ENCODE measurements at regions of chr2 and their contacts with region 1.

Region 1: GRCh38 chr2:95207111-95207961 is at the start of gene ZNF892:
- DNase-seq: peak; percentile 68 to 78 (median 69)
- H3K4me3 ChIP-seq: peak within 1 kb of the TSS; percentile 47 to 93
- H3K4me3 Mint-ChIP-seq: peak within 1 kb of the TSS; percentile 93 to 97 (median 96)
- H3K27ac ChIP-seq: peak within 1 kb of the TSS; percentile 70
- H3K27ac Mint-ChIP-seq: peak within 1 kb of the TSS; percentile 71 to 92 (median 90)
- H3K4me1 ChIP-seq: peaks cover 15% of the 10 kb centered on the region
- H3K4me1 Mint-ChIP-seq: peaks cover 11 to 19% (median 15%) of the 10 kb centered on the region in 4 donors
- H3K27me3 ChIP-seq: no peaks in the 10 kb centered on the region
- H3K27me3 Mint-ChIP-seq: no peaks in the 10 kb centered on the region
- total RNA-seq, gene ZNF892: 4.7 to 5.9 TPM

Region 2: DNA sequence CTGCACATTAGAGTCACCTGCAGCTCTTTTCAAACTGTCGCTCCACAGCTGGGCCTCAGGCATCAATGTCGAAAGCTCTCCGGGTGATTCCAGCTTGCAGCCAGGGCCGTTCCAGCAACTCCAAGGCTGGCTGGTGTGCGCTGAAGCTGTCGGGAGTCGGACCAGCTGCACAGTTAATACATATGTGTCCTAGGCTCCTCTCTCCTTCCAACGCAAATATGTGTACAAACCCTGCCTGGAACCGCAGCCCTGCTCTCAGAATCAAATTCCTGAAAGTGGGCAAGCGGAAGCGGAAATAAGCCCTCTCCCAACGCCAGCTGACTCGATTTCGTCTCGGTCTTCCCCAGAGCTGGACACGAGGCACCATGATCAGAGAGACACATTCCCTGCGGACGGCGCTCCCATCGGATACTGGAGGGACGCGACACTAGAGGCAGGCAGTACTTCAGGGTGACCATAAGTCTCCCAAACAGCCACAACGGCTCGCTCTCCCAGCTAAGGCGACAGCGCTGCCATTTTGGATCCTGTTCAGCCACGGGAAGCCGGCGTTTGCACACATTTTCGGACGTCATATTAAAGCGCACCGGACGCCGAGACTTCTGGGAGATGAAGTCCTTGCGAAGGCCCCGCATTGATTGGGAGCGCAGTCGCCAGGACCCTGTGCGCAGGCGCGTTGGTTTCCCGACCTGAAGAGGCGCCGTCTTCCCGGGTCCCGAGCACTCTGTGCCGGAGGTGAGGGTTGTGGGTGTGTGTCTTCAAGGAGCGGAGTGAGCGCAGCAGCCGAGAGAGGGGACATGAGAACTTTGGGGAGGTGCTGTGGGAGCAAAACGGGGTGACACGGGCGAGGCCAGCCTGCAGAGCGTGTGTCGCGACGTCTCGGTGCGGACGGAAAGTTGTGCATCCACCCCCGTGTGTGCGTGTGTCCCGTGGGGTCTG is 41.9 kb before region 1 on chr2 and contains the start of gene ZNF2:
- CTCF ChIA-PET with region 1: interaction called, 4 read pairs
- POLR2A ChIA-PET with region 1: interaction called, 4 read pairs
- intact Hi-C with region 1: loop called (anchors 1 kb)
- DNase-seq: peak; percentile 95 to 98 (median 96)
- H3K4me3 ChIP-seq: peak within 1 kb of the TSS; percentile 88 to 97
- H3K4me3 Mint-ChIP-seq: peak within 1 kb of the TSS; percentile 95 to 100 (median 100)
- H3K27ac ChIP-seq: peak within 1 kb of the TSS; percentile 89
- H3K27ac Mint-ChIP-seq: peak within 1 kb of the TSS; percentile 94 to 99 (median 98)
- H3K4me1 ChIP-seq: peaks cover 21% of the 10 kb centered on the region
- H3K4me1 Mint-ChIP-seq: peaks cover 24 to 40% (median 35%) of the 10 kb centered on the region in 4 donors
- H3K27me3 ChIP-seq: no peaks in the 10 kb centered on the region
- H3K27me3 Mint-ChIP-seq: no peaks in the 10 kb centered on the region
- total RNA-seq, gene ZNF2: 8.3 to 10.1 TPM